ENCODE measurements at regions of chr17 and their contacts with region 1.

Region 1: DNA sequence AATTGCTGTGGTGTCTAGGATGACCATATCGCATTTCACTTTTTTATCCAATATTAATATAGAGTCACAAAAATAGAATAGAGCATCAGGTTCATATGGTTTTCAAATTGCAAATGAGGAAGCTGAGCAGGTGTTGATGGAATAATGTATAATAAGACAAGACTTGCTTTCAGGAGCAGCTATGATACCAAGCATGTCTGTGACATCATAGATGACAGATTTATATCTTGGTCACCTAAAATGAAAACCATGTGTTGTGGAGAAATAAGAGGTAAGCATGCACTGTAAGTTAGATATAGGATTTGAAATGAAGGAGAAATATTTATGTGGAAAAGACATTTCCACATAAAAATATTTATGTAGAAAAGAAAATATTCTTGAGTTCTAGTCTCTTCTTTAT is 8.6 kb downstream of the MEIOC start:
- DNase-seq: no peak
- H3K4me3 ChIP-seq: no peak overlapping the region
- H3K4me3 Mint-ChIP-seq: no peak overlapping the region
- H3K27ac Mint-ChIP-seq: no peak overlapping the region
- H3K4me1 ChIP-seq: no peaks in the 10 kb centered on the region
- H3K4me1 Mint-ChIP-seq: no peaks in the 10 kb centered on the region
- H3K27me3 ChIP-seq: no peaks in the 10 kb centered on the region
- H3K27me3 Mint-ChIP-seq: peaks cover 4% of the 10 kb centered on the region
- CTCF ChIP-seq: no peak

Region 2: DNA sequence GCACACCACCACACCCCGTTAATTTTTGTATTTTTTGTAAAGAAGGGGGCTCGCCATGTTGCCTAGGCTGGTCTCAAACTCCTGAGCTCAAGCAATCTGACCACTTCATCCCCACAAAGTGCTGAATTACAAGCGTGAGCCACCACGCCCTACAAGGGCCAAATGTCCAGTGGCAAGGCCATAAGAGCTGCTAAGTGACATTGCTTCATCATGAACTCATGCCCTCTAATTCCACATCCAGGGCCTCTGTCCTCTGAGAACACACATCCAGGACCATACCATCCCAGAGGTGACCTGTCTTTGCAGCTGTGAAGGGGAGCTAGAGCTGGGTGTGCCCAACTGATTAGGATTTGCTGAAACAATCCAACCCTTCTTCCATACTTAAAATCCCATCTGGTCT is 34.2 kb before region 1 on chr17:
- CTCF ChIA-PET with region 1: no interaction called
- POLR2A ChIA-PET with region 1: interaction called, 11 read pairs
- intact Hi-C with region 1: no loop called
- DNase-seq: no peak
- H3K4me3 ChIP-seq: no peak overlapping the region
- H3K4me3 Mint-ChIP-seq: no peak overlapping the region
- H3K27ac Mint-ChIP-seq: no peak overlapping the region
- H3K4me1 ChIP-seq: peaks cover 11% of the 10 kb centered on the region
- H3K4me1 Mint-ChIP-seq: peaks cover 15% of the 10 kb centered on the region
- H3K27me3 ChIP-seq: no peaks in the 10 kb centered on the region
- H3K27me3 Mint-ChIP-seq: no peaks in the 10 kb centered on the region
- CTCF ChIP-seq: no peak